ENCODE measurements at regions of chr7 and their contacts with region 1.

Region 1: GRCh38 chr7:155380221-155380861 is 77.6 kb upstream of the EN2 start:
- DNase-seq: peak; percentile 51 to 83 (median 68)
- ATAC-seq: peak; percentile 49 to 89 (median 82)
- H3K4me3 ChIP-seq: no peak overlapping the region
- H3K27ac ChIP-seq: no peak overlapping the region
- H3K4me1 ChIP-seq: peaks cover 0 to 44% (median 25%) of the 10 kb centered on the region in 12 donors
- H3K27me3 ChIP-seq: peaks cover 78 to 100% (median 97%) of the 10 kb centered on the region in 9 donors
- CTCF ChIP-seq: peak; percentile 52 to 79 (median 66)
- POLR2A ChIP-seq: no peak

Region 2: GRCh38 chr7:155090684-155091083 is 289.7 kb before region 1 on chr7:
- intact Hi-C with region 1: no loop called
- DNase-seq: no peak
- ATAC-seq: no peak
- H3K4me3 ChIP-seq: no peak overlapping the region
- H3K27ac ChIP-seq: no peak overlapping the region
- H3K4me1 ChIP-seq: no peaks in the 10 kb centered on the region
- H3K27me3 ChIP-seq: peaks cover 0 to 17% (median 0%) of the 10 kb centered on the region in 9 donors
- CTCF ChIP-seq: no peak
- POLR2A ChIP-seq: no peak

Region 3: GRCh38 chr7:155456738-155457564 is 76.6 kb after region 1 on chr7:
- intact Hi-C with region 1: loop called in 2 of 10 experiments (anchors 10 kb)
- DNase-seq: peak; percentile 57 to 80 (median 65)
- ATAC-seq: peak; percentile 44 to 88 (median 86)
- H3K4me3 ChIP-seq: peak overlapping the region; percentile 20 to 63 (median 52)
- H3K27ac ChIP-seq: no peak overlapping the region
- H3K4me1 ChIP-seq: peaks cover 0 to 49% (median 25%) of the 10 kb centered on the region in 12 donors
- H3K27me3 ChIP-seq: peaks cover 92 to 96% (median 95%) of the 10 kb centered on the region in 9 donors
- CTCF ChIP-seq: no peak
- POLR2A ChIP-seq: no peak

Region 4: DNA sequence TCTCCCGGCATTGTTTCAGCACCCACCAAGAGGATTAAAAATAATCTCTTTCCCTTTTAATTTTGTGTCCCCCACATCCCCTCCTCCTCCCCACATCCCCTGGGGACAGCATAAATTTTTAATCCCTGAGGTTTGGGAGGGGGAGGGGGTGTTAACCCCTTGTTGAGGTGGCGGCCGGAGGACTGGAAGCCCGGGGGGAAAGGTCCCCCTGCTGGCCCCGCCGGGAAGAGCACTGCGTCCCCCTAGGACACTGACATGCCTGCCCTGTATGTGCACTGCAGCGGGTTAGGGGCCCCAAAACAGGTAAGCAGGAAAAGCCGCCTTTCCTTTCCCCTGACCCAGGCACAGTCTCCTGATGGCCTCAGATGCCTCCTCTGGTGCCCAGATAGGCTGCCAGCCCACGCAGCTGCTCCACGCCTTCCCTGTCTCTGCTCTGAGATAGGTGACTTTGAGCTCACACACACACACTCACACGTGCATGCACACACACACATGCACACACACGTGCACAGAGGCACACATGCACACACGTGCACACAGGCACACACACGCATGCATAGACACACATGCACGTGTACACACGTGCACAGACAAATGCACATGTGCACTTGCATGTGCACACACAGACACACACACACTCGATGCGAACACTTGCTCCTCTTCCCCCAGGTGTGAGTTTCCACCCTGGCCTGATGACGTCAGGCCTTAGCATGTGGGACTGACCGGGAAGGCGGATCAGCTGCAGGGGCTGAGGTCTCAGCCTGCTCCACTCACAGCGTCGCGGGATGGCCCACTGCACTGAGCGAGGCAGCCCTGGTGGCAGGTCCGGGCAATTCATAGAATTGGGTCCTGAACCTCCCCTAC is 153.7 kb after region 1 on chr7:
- intact Hi-C with region 1: loop called in 2 of 10 experiments (anchors 5 to 10 kb)
- DNase-seq: no peak
- ATAC-seq: peak in 3 of 4 donors; percentile 42 to 61 (median 59)
- H3K4me3 ChIP-seq: peak overlapping the region in 8 of 12 donors; percentile 12 to 36 (median 26)
- H3K27ac ChIP-seq: no peak overlapping the region
- H3K4me1 ChIP-seq: peaks cover 0 to 15% (median 9%) of the 10 kb centered on the region in 12 donors
- H3K27me3 ChIP-seq: peaks cover 34 to 98% (median 57%) of the 10 kb centered on the region in 9 donors
- CTCF ChIP-seq: peak; percentile 32 to 60 (median 44)
- POLR2A ChIP-seq: no peak

Region 5: DNA sequence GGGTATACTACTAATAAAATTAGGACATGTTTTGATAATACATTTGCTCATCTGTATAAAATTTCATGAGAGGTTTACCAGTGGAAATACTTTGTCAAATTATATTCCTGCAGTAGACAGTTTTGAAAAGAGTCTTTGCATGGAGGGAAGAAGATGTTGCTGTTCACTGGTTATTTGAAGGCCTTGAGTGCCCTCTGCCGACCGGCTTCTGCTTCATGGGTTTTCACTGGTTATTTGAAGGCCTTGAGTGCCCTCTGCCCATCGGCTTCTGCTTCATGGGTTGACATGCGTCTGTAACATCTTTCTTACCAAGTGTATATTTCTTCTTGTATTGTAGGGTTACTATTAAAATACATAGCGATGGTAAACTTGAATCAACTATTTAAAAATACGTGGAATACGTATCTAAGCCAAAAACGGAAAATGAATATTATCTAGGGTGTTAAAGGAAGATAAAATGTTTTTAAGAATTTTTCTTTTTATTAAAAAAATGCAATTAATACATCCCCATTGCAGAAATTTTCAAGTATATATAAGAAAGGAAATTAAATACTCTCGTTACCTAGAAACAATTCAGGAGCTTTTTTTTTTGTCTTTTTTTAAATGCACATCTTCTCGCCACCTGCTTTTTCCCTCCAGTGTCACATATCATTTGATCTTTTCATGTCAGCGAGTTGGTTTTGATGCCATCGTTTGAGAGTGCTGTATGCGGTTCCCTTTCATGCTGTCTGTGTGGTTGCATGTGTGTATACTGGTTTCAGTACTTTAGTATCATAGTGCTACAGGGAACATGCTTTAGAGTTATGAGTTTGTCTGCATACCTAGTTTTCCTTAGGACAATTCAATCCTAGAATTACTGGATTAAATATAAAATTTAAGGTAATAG is 358.6 kb after region 1 on chr7:
- intact Hi-C with region 1: loop called in 2 of 10 experiments (anchors 2 to 5 kb)
- DNase-seq: peak; percentile 57 to 81 (median 71)
- ATAC-seq: peak in 3 of 4 donors; percentile 81 to 85 (median 82)
- H3K4me3 ChIP-seq: no peak overlapping the region
- H3K27ac ChIP-seq: no peak overlapping the region
- H3K4me1 ChIP-seq: peaks cover 0 to 8% (median 4%) of the 10 kb centered on the region in 12 donors
- H3K27me3 ChIP-seq: no peaks in the 10 kb centered on the region
- CTCF ChIP-seq: peak; percentile 31 to 75 (median 62)
- POLR2A ChIP-seq: no peak

Region 6: DNA sequence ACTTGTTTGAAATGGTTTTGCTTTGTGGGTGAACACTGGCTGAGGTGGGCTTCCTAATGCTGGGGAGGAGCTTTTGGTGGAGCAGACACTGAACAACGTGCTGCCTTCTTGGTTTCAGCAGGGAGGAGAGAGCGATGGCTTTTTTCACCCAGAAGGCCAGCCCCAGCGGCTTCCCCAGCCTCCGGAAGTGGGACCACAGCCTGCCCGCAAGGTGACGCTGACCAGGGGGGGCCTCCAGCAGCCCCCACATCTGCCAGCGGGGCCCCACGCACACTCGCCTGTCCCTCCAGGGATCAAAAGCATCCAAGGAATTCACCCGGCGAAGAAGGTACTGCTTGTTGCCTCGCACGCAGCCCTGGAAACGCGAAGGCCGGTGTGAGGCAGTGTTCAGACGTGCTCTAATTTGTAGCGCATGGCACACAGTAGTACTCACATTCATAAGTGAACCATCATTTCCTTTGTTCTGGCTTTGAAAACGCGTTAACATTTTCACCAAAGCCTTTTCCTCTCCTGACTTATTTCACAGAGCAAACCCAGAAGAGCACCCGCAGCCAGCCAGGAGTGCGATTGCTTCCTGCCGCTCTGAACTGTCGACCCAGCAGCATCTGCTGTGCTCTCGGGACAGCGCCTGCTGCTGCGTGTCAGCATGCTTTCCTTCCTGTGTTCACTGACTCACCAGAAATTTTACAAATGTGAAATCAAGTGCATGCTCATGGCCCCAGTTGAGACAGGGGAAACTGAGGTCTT is 383.5 kb after region 1 on chr7:
- intact Hi-C with region 1: loop called in 2 of 10 experiments (anchors 1 to 5 kb)
- DNase-seq: no peak
- ATAC-seq: peak in 3 of 4 donors; percentile 62 to 76 (median 63)
- H3K4me3 ChIP-seq: peak overlapping the region in 1 of 12 donors; percentile 28
- H3K27ac ChIP-seq: peak overlapping the region in 11 of 12 donors; percentile 3 to 85 (median 48)
- H3K4me1 ChIP-seq: peaks cover 4 to 59% (median 22%) of the 10 kb centered on the region in 12 donors
- H3K27me3 ChIP-seq: no peaks in the 10 kb centered on the region
- CTCF ChIP-seq: no peak
- POLR2A ChIP-seq: no peak

Region 7: DNA sequence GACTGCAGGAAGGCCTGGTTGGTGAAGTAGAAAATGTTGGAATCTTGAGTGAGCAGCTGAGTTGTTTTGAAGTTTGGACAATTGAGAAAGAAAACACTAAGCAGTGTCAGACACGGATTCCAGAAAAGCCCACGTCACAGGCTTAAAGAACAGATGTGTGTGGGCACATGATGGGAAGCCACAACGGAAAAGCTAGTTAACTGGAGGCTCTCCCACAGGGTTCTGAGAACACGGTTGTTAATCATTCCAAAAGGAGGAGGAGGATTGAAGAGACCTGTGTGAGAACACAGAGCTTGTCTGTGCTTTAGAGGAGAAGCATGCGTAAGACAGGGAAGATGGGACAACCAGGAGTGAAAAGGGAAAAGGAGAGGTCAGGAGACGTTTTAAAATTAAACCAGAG is 389.4 kb after region 1 on chr7:
- intact Hi-C with region 1: loop called in 2 of 10 experiments (anchors 1 to 5 kb)
- DNase-seq: no peak
- ATAC-seq: peak in 3 of 4 donors; percentile 7 to 61 (median 60)
- H3K4me3 ChIP-seq: no peak overlapping the region
- H3K27ac ChIP-seq: peak overlapping the region in 4 of 12 donors; percentile 18 to 66 (median 40)
- H3K4me1 ChIP-seq: peaks cover 0 to 17% (median under 1%) of the 10 kb centered on the region in 12 donors
- H3K27me3 ChIP-seq: no peaks in the 10 kb centered on the region
- CTCF ChIP-seq: no peak
- POLR2A ChIP-seq: no peak

Measured in heart left ventricle (tissue), 16 donors.